ENCODE measurements at regions of chr18 and their contacts with region 1.

Region 1: DNA sequence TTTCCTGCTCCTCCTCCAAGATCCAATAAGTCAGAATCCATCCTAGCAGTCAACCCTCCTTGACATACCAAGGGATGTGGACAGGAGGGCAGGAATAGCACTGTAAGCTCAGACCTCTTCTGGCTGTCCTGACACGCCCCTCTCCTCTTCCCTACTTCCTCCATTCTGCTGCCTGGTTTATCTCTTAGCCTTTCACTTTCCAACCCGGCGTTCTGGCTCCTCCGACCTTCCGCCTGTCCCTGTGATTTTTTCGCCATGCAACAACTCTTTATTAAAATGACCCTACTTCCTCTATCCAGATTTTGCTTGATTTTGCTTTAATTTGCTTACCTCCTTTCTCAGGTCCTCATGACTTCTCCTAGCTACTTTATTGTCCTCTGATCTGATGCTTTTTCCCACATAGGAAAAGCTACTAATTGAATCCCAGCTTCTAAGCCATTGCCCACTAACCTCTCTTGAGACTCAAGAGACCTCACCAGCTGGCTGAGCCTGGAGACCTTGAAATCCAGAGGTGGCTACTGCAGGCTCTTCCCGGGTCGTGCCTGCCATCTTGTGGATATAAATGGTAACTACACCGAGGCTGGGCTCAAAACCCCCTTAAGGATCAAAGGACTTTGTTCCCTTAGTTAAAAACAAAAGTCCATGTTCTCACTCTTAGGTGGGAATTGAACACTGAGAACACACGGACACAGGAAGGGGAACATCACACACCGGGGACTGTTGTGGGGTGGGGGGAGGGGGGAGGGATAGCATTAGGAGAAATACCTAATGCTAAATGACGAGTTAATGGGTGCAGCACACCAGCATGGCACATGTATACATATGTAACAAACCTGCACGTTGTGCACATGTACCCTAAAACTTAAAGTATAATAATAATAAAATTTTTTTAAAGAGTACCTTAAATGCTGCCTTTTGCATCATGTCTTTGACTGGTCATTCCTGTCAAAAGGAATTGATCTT is 139.4 kb downstream of the AKAIN1 start:
- DNase-seq: peak; percentile 33
- H3K4me3 ChIP-seq: no peak overlapping the region
- H3K27ac ChIP-seq: no peak overlapping the region
- H3K4me1 ChIP-seq: no peaks in the 10 kb centered on the region
- H3K27me3 ChIP-seq: no peaks in the 10 kb centered on the region
- CTCF ChIP-seq: peak; percentile 73

Region 2: DNA sequence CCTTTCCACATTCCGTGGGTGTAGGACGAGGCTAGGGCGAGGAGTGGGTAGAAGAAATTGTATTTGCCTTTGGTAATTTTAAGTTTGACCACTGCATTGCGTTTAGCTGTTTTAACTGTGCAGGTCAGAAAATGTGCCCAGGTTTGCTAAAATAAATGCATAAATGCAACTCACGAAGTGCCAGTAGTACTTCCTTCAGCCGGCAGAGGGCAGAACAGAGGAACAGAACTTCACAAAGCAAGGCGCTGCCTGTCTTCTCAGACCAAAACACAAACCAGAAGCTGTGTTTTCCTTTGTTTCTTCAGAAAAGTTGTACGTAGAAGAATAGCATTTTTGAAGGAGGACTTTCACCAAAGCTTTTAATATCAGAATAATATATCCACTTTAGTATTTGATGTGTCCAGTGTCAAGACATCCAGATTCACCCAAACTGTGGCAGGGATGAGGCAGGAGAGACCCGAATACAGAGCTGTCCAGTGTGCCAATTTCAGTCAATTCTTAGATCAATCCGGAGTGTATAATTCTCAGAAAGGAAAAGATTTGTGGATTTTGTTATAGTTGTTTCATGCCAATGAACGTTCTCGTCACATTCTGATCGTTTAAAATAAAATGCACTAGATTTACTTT is 951.1 kb before region 1 on chr18:
- intact Hi-C with region 1: loop called (anchors 2 kb)
- DNase-seq: peak; percentile 64
- H3K4me3 ChIP-seq: no peak overlapping the region
- H3K27ac ChIP-seq: no peak overlapping the region
- H3K4me1 ChIP-seq: no peaks in the 10 kb centered on the region
- H3K27me3 ChIP-seq: no peaks in the 10 kb centered on the region
- CTCF ChIP-seq: peak; percentile 71

Region 3: GRCh38 chr18:5015213-5015711 is 42.4 kb before region 1 on chr18:
- intact Hi-C with region 1: no loop called
- DNase-seq: no peak
- H3K4me3 ChIP-seq: no peak overlapping the region
- H3K27ac ChIP-seq: no peak overlapping the region
- H3K4me1 ChIP-seq: no peaks in the 10 kb centered on the region
- H3K27me3 ChIP-seq: no peaks in the 10 kb centered on the region
- CTCF ChIP-seq: no peak

Region 4: DNA sequence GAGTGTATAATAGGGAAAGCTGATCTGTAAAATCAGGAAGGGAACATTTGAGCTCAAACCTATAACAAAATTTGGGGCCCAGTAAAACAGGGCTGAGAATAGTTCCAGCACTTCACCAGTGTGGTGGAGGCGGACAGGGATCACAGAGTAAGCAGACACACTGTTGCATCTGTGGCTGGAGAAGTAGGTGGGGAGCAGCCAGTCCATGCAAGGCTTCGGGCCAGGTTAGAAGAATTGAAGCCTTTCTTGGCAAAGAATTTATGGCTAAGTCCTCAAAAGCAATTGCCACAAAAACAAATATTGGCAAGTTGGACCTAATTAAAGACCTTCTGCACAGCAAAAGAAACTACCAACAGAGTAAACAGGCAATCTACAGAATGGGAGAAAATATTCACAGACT is 331.7 kb after region 1 on chr18:
- intact Hi-C with region 1: no loop called
- DNase-seq: no peak
- H3K4me3 ChIP-seq: no peak overlapping the region
- H3K27ac ChIP-seq: no peak overlapping the region
- H3K4me1 ChIP-seq: no peaks in the 10 kb centered on the region
- H3K27me3 ChIP-seq: no peaks in the 10 kb centered on the region
- CTCF ChIP-seq: no peak

Measured in colonic mucosa (tissue), 4 donors.